Naive thymus-derived CD4-positive, alpha-beta T cell (primary cell): ENCODE measurements at regions of chr21 and their contacts with region 1.

Region 1: DNA sequence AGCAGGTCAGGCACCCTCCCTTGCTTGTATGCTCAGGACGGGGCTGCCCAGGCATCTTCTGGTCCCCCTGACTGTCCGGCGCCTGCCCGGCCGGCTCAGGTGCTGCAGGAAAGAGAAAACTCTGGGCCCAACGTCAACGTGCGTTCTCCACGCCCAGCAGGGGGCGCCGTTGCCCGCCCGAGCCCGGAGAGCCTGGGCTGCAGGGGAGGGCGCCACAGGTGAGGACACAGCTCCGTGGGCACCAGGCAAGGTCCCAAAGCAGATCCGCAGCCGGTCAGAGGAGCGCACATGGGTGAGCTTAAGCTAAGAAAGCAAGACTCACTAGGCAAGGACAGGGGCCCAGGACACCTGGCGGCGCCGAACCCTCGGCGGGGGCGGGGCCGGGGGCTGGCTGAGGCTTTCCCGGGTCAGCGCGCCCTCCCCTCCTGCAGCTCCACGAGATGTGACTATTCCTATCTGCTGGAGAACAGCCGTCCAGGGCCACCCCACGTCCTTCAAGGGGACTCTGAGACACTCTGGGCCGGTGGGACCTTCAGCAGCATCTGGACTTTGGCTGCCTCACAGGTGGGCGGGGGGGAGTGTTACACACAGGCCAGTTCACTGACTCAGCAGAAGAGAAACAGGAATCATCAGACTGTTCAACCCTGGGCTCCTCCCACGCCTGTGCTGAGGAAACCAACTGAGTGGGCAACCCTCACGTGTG is 29.3 kb downstream of the KRTAP10-1 start:
- DNase-seq: peak; percentile 65 to 95 (median 85)
- ATAC-seq: peak; percentile 87
- H3K4me3 ChIP-seq: peak overlapping the region; percentile 64
- H3K4me3 Mint-ChIP-seq: peak overlapping the region in 9 of 10 donors; percentile 58 to 75 (median 65)
- H3K27ac ChIP-seq: no peak overlapping the region
- H3K27ac Mint-ChIP-seq: peak overlapping the region in 3 of 9 donors; percentile 6 to 41 (median 38)
- H3K4me1 ChIP-seq: peaks cover 7 to 13% of the 10 kb centered on the region in 2 donors
- H3K4me1 Mint-ChIP-seq: peaks cover 0 to 3% (median 0%) of the 10 kb centered on the region in 7 donors
- H3K27me3 ChIP-seq: no peaks in the 10 kb centered on the region
- H3K27me3 Mint-ChIP-seq: no peaks in the 10 kb centered on the region

Region 2: GRCh38 chr21:44547656-44548331 is 37.1 kb after region 1 on chr21:
- CTCF ChIA-PET with region 1: interaction called, 7 read pairs
- POLR2A ChIA-PET with region 1: no interaction called
- intact Hi-C with region 1: loop called in 1 of 2 experiments (anchors 5 kb)
- DNase-seq: peak in 8 of 9 donors; percentile 16 to 73 (median 59)
- ATAC-seq: peak; percentile 74
- H3K4me3 ChIP-seq: peak overlapping the region; percentile 50
- H3K4me3 Mint-ChIP-seq: peak overlapping the region; percentile 75 to 86 (median 83)
- H3K27ac ChIP-seq: peak overlapping the region; percentile 56
- H3K27ac Mint-ChIP-seq: peak overlapping the region; percentile 85 to 99 (median 95)
- H3K4me1 ChIP-seq: peaks cover 15 to 19% of the 10 kb centered on the region in 2 donors
- H3K4me1 Mint-ChIP-seq: peaks cover 16 to 34% (median 30%) of the 10 kb centered on the region in 7 donors
- H3K27me3 ChIP-seq: no peaks in the 10 kb centered on the region
- H3K27me3 Mint-ChIP-seq: peaks cover 0 to 5% (median 0%) of the 10 kb centered on the region in 5 donors

Region 3: DNA sequence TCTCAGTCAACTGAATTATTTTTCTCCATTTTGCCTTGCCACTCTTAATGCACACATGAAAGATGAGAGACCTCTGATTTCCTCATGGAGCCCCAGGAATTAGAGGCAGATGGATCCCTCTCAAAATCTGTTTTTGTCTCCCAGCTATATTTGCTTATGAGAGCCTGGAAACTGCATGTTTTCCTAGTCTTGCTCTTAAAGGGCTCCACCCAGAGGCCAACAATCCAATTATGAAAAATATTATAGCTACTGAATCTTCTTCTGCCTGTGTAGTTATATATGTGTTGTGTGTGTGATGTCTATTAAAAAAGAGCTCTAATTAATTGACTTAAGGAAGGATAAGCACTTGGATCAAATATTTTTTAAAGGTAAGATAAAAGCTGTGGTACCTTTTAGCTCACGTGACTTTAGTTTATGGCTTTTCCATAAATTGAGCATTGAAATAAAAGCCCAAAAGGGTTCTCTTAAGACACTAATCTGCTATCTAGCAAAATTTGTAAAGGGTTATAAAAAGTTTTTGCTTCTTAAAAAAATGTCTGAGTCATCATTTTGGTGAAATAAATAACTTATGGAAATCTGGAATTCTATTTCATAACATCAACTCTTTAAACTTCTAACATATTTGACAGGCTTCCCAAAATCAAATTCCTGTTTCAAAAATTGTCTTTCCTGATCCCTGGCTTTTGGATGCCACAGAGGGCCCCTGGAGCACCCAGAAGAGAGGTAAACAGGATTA is 231.9 kb after region 1 on chr21:
- CTCF ChIA-PET with region 1: interaction called, 111 read pairs
- POLR2A ChIA-PET with region 1: interaction called, 10 read pairs
- intact Hi-C with region 1: loop called (anchors 1 kb)
- DNase-seq: peak in 6 of 9 donors; percentile 16 to 61 (median 46)
- ATAC-seq: no peak
- H3K4me3 ChIP-seq: no peak overlapping the region
- H3K4me3 Mint-ChIP-seq: no peak overlapping the region
- H3K27ac ChIP-seq: no peak overlapping the region
- H3K27ac Mint-ChIP-seq: peak overlapping the region in 7 of 9 donors; percentile 29 to 80 (median 75)
- H3K4me1 ChIP-seq: no peaks in the 10 kb centered on the region
- H3K4me1 Mint-ChIP-seq: peaks cover 2 to 11% (median 6%) of the 10 kb centered on the region in 7 donors
- H3K27me3 ChIP-seq: no peaks in the 10 kb centered on the region
- H3K27me3 Mint-ChIP-seq: peaks cover 0 to 33% (median 0%) of the 10 kb centered on the region in 5 donors

Region 4: DNA sequence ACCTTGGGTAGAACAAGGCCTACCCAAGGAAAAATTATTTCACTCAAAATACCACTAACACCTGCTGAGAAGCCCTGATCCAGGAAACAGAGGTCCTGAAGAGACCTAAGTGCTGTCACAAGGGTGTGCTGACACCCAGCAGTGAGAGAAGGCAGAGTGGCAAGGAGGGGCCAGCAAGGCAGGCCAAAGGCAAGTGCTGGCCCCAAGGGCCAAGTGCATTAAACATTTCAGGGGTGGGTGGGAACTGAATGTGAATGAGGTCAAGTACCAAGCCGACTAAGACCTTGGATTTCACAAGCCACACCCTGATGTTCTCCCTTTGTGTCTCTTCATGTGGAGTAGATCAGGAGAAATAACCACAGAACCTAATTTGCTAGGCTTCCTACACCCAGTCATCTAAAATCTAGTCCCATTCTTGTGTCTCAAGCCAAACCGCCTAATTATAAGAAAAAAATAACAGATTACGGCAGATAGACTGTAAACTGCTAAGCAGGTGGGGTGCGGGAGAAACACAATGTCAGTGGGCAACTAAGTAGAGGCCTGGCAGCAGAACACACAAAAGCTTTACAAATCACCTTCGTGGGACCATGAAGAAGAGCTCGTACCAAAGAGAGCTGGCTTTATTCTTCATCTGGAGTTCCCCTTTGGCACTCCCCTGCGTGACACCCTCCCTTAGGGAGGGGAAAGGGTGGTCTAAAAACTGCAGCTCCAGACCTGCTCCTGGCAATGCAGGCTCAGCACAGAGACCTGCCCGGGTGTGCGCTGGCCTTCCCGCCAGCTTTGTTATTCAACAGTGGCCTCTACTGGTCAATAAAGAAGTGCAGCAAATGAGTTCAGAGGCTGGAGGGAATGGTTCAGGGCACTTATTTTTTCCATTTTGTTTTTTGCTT is 282.3 kb after region 1 on chr21:
- CTCF ChIA-PET with region 1: interaction called, 68 read pairs
- POLR2A ChIA-PET with region 1: interaction called, 3 read pairs
- intact Hi-C with region 1: loop called (anchors 1 kb)
- DNase-seq: peak in 8 of 9 donors; percentile 37 to 73 (median 62)
- ATAC-seq: peak; percentile 96
- H3K4me3 ChIP-seq: no peak overlapping the region
- H3K4me3 Mint-ChIP-seq: no peak overlapping the region
- H3K27ac ChIP-seq: no peak overlapping the region
- H3K27ac Mint-ChIP-seq: peak overlapping the region; percentile 2 to 83 (median 40)
- H3K4me1 ChIP-seq: peaks cover 7 to 10% of the 10 kb centered on the region in 2 donors
- H3K4me1 Mint-ChIP-seq: peaks cover 17 to 64% (median 53%) of the 10 kb centered on the region in 7 donors
- H3K27me3 ChIP-seq: no peaks in the 10 kb centered on the region
- H3K27me3 Mint-ChIP-seq: no peaks in the 10 kb centered on the region